MCF 10A (cell line): ENCODE measurements at regions of chr17 and their contacts with region 1.

Region 1: GRCh38 chr17:4980644-4981216 is 6.7 kb downstream of the CAMTA2 start:
- DNase-seq: peak; percentile 63
- H3K4me3 Mint-ChIP-seq: no peak overlapping the region
- H3K27ac Mint-ChIP-seq: no peak overlapping the region
- H3K4me1 Mint-ChIP-seq: peaks cover 5% of the 10 kb centered on the region
- H3K27me3 Mint-ChIP-seq: no peaks in the 10 kb centered on the region
- CTCF ChIP-seq: peak; percentile 60

Region 2: DNA sequence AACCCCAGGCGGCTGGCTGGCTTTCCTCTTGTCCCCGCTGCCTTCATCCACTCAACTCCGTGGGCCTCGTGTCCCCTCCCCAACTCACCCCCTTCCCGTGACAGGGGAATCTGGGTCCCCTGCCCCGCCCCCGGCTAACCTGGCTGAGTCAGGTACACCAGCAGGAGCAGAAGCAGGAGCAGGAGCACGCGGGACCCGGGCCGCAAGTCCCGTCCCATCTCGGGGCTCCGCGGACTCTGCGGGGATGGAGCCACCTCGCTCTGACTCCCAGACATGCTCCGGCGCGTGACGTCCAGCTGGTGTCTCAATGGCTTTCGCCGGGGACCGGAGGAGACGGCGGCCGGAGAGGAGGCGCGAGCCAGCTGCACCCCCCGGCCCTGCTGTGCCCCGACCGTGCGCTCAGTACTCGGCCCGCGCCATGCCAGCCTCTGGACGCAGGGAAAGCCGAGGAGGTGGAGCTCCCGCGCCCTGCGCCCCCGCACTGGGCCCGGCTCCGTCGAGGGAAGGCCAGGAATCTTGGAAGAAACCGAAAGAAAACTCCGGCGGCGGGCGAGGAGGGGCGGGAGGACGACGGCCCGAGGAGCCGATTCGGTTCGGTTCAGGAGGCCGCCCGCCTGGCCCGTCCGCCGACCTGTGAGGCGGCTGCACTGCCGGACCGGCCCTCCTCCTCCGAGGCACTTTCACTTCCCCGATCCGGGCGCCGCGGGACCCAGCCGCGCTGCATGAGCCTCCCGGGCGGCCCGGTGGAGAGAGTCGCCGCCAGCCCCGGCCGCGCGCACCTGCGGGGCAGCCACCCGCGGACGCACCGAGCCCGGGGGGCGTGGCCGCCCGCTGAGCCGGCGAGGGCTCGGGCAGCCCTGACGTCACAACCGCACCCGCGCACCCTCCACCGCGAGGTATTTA is 241.4 kb before region 1 on chr17 and contains the starts of genes CXCL16 and ZMYND15:
- CTCF ChIA-PET with region 1: no interaction called
- POLR2A ChIA-PET with region 1: no interaction called
- intact Hi-C with region 1: no loop called
- DNase-seq: peak; percentile 49
- H3K4me3 Mint-ChIP-seq: peak within 1 kb of the TSS; percentile 73
- H3K27ac Mint-ChIP-seq: peak within 1 kb of the TSS; percentile 76
- H3K4me1 Mint-ChIP-seq: peaks cover 30% of the 10 kb centered on the region
- H3K27me3 Mint-ChIP-seq: no peaks in the 10 kb centered on the region
- CTCF ChIP-seq: no peak
- total RNA-seq, gene CXCL16: 16.7 and 20.6 TPM in 2 replicates
- total RNA-seq, gene ZMYND15: 1.3 and 1.8 TPM in 2 replicates

Region 3: DNA sequence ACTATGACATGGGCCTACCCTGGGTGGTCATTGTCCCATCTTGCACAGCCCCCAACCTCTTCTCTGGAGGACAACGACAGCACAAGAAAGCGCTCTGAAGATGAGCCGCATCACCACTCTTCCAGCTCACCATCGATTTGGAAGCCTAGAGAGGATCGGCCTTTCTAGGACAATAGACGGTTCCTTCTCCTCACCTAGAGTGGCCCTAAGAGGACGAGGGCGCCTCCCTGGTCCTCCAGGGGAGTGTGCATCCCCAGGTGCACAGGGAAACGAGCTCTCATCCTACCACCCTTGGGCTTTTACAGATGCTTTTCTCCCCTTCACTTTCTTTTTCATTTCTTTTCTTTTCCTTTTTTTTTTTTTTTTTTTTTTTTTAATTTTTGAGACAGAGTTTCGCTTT is 74.8 kb after region 1 on chr17:
- CTCF ChIA-PET with region 1: interaction called, 50 read pairs
- POLR2A ChIA-PET with region 1: no interaction called
- intact Hi-C with region 1: no loop called
- DNase-seq: no peak
- H3K4me3 Mint-ChIP-seq: no peak overlapping the region
- H3K27ac Mint-ChIP-seq: no peak overlapping the region
- H3K4me1 Mint-ChIP-seq: peaks cover 6% of the 10 kb centered on the region
- H3K27me3 Mint-ChIP-seq: peaks cover 11% of the 10 kb centered on the region
- CTCF ChIP-seq: no peak

Region 4: GRCh38 chr17:5065227-5065744 is 84.6 kb after region 1 on chr17:
- CTCF ChIA-PET with region 1: interaction called, 50 read pairs
- POLR2A ChIA-PET with region 1: no interaction called
- intact Hi-C with region 1: loop called (anchors 1 kb)
- DNase-seq: peak; percentile 28
- H3K4me3 Mint-ChIP-seq: no peak overlapping the region
- H3K27ac Mint-ChIP-seq: no peak overlapping the region
- H3K4me1 Mint-ChIP-seq: no peaks in the 10 kb centered on the region
- H3K27me3 Mint-ChIP-seq: peaks cover 10% of the 10 kb centered on the region
- CTCF ChIP-seq: no peak